ENCODE measurements at regions of chr18 and their contacts with region 1.

Region 1: GRCh38 chr18:35605686-35606417 is 24.3 kb downstream of the GALNT1 start:
- DNase-seq: no peak
- H3K4me3 ChIP-seq: no peak overlapping the region
- H3K27ac ChIP-seq: no peak overlapping the region
- H3K4me1 ChIP-seq: peaks cover 0 to 36% (median 4%) of the 10 kb centered on the region in 3 donors
- H3K27me3 ChIP-seq: no peaks in the 10 kb centered on the region
- CTCF ChIP-seq: no peak
- POLR2A ChIP-seq: no peak

Region 2: DNA sequence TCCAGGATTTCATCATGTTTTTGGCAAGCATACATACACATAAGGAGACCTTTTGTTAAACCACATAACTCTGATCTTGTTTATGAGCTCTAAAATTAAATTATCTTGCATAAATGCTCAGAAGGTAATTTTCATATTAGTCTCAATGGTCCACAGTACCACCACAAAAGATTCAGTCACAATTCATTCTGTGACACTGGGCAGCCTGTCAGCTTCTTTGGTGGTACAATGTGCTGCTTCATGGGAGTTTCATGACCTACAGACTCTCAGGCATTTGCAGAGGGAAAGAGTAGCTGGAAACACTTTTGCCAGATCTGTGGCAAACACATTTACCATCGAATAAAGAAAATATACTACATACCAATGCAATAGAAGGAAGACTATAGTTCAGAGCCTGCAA is 416.3 kb before region 1 on chr18:
- intact Hi-C with region 1: no loop called
- DNase-seq: no peak
- H3K4me3 ChIP-seq: no peak overlapping the region
- H3K27ac ChIP-seq: no peak overlapping the region
- H3K4me1 ChIP-seq: no peaks in the 10 kb centered on the region
- H3K27me3 ChIP-seq: no peaks in the 10 kb centered on the region
- CTCF ChIP-seq: no peak
- POLR2A ChIP-seq: no peak

Region 3: GRCh38 chr18:35390951-35391700 is 214.7 kb before region 1 on chr18:
- intact Hi-C with region 1: loop called (anchors 10 kb)
- DNase-seq: no peak
- H3K4me3 ChIP-seq: no peak overlapping the region
- H3K27ac ChIP-seq: no peak overlapping the region
- H3K4me1 ChIP-seq: no peaks in the 10 kb centered on the region
- H3K27me3 ChIP-seq: no peaks in the 10 kb centered on the region
- CTCF ChIP-seq: no peak
- POLR2A ChIP-seq: no peak

Measured in esophagus squamous epithelium (tissue), 5 donors.